ENCODE measurements at regions of chr12 and their contacts with region 1.

Region 1: GRCh38 chr12:92505254-92506231 is 197.2 kb upstream of the PLEKHG7 start:
- DNase-seq: no peak
- CTCF ChIP-seq: no peak

Region 2: GRCh38 chr12:92561543-92561899 is 56.0 kb after region 1 on chr12:
- in situ Hi-C with region 1: loop called (anchors 10 kb)
- DNase-seq: no peak
- CTCF ChIP-seq: no peak